Activated CD8-positive, alpha-beta T cell treated with anti-CD3 and anti-CD28 coated beads, Interleukin-2, amount 10 ng/mL, durations not matched to agents 7 days and 5 days (primary cell): ENCODE measurements at regions of chr11 and their contacts with region 1.

Region 1: GRCh38 chr11:62787005-62787759 is at the start of gene TMEM179B:
- DNase-seq: peak; percentile 100
- ATAC-seq: peak; percentile 70
- H3K4me3 Mint-ChIP-seq: peak within 1 kb of the TSS; percentile 96
- H3K27ac Mint-ChIP-seq: peak within 1 kb of the TSS; percentile 98
- H3K4me1 Mint-ChIP-seq: peaks cover 46% of the 10 kb centered on the region
- H3K27me3 Mint-ChIP-seq: no peaks in the 10 kb centered on the region
- total RNA-seq, gene TMEM179B: 37.3 to 40.8 TPM

Region 2: DNA sequence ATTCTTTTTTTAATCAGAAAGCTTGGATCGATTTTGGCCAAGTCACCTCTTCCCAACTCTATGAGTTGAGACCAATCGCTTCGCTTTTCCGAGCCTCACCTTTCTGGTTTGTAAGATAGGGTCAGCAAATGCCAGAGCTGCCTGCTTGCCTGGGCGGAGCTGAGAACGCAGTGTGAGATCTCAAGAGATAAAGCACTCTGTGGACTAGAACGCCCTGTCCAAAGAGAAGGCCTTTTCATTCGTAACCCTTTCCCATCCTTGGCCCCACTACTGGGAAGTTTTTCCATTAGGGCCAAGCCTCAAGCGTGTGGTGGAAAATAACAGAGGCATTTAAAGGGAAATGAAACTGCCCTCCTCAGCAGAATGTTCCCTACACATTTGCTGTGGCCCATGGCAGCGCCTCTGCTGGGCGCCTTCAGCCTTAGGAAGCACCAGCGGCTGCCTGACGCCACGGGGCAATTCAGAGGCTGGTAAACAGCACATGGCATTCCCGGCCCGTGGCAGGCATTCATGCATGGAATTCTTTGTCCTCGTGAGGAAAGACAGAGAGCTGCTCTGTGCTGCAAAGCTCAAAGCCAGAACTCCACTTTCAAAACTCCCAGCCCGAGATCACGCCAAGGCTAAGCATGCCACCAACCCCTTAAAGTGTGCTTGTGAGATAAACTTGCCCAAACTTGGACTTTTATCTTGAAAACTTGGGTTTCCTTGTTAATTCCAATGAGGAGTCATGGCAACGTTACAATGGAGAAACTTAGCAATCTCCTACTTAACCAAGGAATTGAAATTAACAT is 278.7 kb before region 1 on chr11:
- CTCF ChIA-PET with region 1: no interaction called
- POLR2A ChIA-PET with region 1: no interaction called
- DNase-seq: no peak
- ATAC-seq: no peak
- H3K4me3 Mint-ChIP-seq: no peak overlapping the region
- H3K27ac Mint-ChIP-seq: no peak overlapping the region
- H3K4me1 Mint-ChIP-seq: no peaks in the 10 kb centered on the region
- H3K27me3 Mint-ChIP-seq: peaks cover 17% of the 10 kb centered on the region

Region 3: DNA sequence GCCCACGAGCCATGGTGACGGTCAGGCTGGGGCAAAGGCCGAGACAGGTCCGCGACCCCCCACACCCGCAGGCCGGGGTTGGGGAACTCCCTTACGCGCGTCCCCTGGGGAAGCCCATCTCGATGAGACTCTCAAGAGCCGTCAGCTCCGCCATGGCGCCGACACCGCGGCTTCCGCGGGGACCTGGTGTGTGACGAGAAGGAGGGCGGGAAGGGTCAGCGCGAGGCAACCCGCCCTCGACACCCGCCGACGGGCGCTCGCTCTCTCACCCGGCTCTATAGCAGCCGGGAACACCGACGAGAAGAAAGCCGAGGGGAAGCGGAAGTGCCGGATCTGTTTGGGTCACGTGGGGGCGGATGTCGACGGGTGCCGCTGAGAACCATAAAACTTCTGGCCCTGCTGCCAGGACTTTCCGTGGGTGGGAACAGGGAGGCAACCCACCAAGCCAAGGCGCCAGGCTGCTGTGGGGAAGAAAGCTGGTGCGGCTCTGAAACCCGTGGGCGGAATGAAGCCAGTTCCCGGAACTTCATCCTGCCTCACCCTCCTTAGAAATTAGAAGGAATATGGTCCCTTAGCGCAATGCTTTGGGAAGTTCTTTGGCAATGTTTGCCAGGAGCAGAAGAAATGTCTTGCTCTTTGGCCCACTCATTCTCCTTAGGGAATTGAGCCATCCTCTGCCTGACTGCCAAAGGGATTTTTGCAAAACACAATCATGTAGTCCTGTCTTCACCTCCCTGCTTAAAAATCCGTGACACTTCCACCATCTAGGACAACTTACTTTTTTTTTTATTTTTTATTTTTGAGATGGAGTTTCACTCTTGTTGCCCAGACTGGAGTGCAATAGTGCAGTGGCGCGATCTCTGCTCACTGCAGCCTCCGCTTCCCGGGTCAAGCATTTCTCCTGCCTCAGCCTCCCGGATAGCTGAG is 108.1 kb before region 1 on chr11 and contains the start of gene UBXN1:
- CTCF ChIA-PET with region 1: interaction called, 11 read pairs
- POLR2A ChIA-PET with region 1: interaction called, 3 read pairs
- DNase-seq: peak; percentile 89
- ATAC-seq: peak; percentile 88
- H3K4me3 Mint-ChIP-seq: peak within 1 kb of the TSS; percentile 92
- H3K27ac Mint-ChIP-seq: peak within 1 kb of the TSS; percentile 87
- H3K4me1 Mint-ChIP-seq: peaks cover 42% of the 10 kb centered on the region
- H3K27me3 Mint-ChIP-seq: no peaks in the 10 kb centered on the region
- total RNA-seq, gene UBXN1: 107 to 118 TPM

Region 4: DNA sequence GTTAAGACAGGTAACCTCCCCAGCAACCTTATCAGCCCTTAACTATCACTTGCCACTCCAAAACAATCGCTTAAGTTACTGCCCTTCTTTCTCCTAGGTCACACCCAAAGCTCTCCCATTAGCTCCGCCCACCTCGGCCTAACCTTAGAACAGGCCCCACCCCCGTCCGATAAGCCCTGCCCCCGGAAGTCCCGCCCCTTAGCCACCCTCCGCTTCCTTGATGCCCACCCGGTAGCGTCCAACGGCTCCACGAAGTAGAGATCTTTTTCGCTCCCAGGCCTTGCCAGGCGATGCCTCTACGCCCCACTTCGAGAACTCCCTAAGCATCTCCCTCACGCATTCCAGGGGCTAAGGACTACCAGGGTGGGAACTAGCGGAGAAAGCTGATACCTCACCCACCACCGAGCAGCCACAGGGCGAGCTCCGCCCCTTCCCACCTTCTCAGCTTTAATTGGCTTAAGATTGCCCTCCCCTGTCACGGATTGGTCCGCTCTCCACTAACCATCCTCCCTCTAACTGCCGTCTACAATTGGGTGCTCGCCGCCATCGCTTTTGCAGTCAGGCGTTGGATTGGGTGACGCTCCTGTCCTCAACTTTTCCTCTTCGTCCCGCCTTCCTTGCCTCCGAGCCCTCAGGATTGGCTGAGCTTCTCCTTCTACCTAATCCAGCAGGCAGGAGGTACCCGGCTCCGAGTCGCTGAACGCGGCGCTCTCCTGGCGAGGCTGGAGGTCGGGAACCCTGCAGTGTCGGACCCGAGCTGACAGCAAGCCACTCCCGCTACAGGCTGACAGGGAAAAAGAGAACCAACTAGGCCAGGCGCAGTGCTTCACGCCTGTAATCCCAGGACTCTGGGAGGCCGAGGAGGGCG is 33.2 kb before region 1 on chr11 and contains the start of gene ZBTB3:
- CTCF ChIA-PET with region 1: interaction called, 47 read pairs
- POLR2A ChIA-PET with region 1: interaction called, 22 read pairs
- DNase-seq: peak; percentile 99
- ATAC-seq: peak; percentile 99
- H3K4me3 Mint-ChIP-seq: peak within 1 kb of the TSS; percentile 94
- H3K27ac Mint-ChIP-seq: peak within 1 kb of the TSS; percentile 97
- H3K4me1 Mint-ChIP-seq: peaks cover 31% of the 10 kb centered on the region
- H3K27me3 Mint-ChIP-seq: no peaks in the 10 kb centered on the region
- total RNA-seq, gene ZBTB3: 12.4 to 12.8 TPM

Region 5: DNA sequence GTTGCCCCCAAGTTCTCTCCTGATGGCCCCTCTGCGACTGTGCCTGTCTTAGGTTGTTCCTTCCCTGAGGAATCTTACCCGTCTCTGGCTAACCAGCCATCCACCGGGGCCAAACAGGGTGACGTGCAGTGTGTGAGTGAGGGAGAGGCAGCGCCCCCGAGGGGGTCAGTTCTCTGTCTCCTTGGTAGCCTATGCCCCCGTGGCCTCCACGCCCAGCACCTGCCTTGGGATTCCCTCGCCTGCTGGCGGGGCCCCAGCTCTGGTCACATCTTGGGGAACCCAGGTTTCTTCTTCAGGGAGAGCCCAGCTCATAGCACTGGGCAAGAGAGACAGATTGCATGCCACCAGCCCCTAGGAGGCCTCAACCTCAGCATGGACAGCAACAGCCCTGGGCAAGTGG is 12.3 kb after region 1 on chr11:
- CTCF ChIA-PET with region 1: interaction called, 23 read pairs
- POLR2A ChIA-PET with region 1: interaction called, 25 read pairs
- DNase-seq: no peak
- ATAC-seq: no peak
- H3K4me3 Mint-ChIP-seq: no peak overlapping the region
- H3K27ac Mint-ChIP-seq: no peak overlapping the region
- H3K4me1 Mint-ChIP-seq: peaks cover 18% of the 10 kb centered on the region
- H3K27me3 Mint-ChIP-seq: no peaks in the 10 kb centered on the region

Region 6: DNA sequence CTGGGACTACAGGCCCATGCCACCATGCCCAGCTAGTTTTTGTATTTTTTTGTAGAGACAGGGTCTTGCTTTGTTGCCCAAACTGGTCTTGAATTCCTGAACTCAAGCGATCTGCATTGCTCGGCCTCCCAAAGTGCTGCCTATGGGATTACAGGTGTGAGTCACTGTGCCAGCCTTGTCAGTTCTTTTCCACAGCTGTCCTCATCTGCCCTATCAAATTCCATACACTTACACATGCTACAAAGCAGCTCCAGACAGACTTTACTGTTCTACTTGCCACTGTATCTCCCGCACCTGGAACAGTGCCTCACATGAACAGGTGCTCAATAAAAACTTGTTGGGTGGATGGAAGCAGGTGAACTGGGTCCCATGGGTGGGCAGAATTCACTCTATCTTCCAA is 36.5 kb after region 1 on chr11:
- CTCF ChIA-PET with region 1: interaction called, 14 read pairs
- POLR2A ChIA-PET with region 1: interaction called, 4 read pairs
- DNase-seq: no peak
- ATAC-seq: no peak
- H3K4me3 Mint-ChIP-seq: no peak overlapping the region
- H3K27ac Mint-ChIP-seq: peak overlapping the region; percentile 32
- H3K4me1 Mint-ChIP-seq: peaks cover 19% of the 10 kb centered on the region
- H3K27me3 Mint-ChIP-seq: no peaks in the 10 kb centered on the region

Region 7: GRCh38 chr11:62855571-62856332 is 68.6 kb after region 1 on chr11:
- CTCF ChIA-PET with region 1: interaction called, 80 read pairs
- POLR2A ChIA-PET with region 1: interaction called, 54 read pairs
- DNase-seq: peak; percentile 99
- ATAC-seq: peak; percentile 85
- H3K4me3 Mint-ChIP-seq: peak overlapping the region; percentile 99
- H3K27ac Mint-ChIP-seq: peak overlapping the region; percentile 98
- H3K4me1 Mint-ChIP-seq: peaks cover 69% of the 10 kb centered on the region
- H3K27me3 Mint-ChIP-seq: no peaks in the 10 kb centered on the region

Region 8: DNA sequence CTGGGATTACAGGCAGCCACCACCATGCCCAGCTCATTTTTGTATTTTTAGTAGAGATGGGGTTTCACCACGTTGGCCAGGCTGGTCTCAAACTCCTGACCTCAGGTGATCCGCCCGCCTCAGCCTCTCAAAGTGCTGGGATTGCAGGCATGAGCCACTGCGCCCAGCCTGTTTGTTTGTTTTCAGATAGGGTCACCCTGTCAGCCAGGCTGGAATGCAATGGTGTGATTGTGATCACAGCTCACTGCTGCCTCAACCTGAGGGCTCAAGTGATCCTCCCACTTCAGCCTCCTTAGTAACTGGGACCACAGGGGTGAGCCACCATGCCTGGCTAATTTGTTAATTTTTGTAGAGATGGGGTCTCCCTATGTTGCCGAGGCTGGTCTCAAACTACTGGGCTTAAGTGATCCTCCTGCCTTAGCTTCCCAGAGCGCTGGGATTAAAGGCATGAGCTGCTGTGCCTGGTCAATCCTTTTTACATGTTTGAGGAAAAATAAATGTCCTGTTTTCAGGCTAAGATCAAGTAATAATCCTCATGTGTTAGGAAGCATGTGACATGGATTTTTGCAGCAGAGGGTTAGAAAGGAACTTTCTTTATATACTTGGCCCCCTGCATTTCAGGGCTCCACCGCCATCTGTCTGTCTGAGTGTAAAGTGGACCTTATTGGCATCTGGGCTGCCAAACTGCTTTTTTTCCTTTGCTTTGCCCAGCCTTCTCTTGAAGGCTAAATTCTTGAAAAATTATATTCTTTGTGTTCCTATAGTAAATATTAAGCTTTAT is 88.7 kb after region 1 on chr11:
- CTCF ChIA-PET with region 1: interaction called, 46 read pairs
- POLR2A ChIA-PET with region 1: interaction called, 22 read pairs
- DNase-seq: no peak
- ATAC-seq: no peak
- H3K4me3 Mint-ChIP-seq: no peak overlapping the region
- H3K27ac Mint-ChIP-seq: no peak overlapping the region
- H3K4me1 Mint-ChIP-seq: peaks cover 17% of the 10 kb centered on the region
- H3K27me3 Mint-ChIP-seq: no peaks in the 10 kb centered on the region

Region 9: DNA sequence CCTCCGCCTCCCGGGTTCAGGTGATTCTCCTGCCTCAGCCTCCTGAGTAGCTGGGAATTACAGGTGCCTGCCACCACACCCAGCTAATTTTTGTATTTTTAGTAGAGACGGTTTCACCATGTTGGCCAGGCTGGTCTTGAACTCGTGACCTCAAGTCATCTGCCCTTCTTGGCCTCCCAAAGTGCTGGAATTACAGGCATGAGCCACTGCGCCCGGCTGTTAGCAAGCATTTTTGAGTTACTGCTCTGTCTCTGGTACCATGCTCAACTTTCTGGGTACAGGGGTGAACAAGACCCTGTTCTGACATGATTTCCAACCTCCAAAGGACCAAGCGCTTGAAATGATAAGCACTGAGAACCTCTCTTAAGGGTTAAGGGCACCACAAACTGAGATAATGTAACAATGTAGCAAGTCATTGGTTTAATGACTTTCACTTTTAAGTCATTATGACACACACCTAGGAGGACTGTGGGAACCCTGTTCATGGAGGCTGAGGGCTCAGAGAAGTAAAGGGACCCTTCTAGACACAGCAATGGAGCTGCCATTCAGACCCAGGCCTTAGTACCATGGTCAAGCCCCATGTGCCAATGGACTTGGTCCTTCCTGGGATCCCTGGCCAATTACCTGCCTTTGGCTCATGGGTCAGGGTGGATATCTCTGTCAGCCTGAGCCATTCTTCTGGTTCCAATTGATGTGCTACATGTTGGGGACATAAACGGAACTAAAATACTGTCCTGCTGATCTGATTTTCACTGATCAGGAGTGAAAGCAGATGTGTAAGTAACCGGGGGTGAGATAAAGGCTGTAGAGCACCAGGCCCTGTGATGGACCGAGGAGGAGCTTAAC is 105.1 kb after region 1 on chr11:
- CTCF ChIA-PET with region 1: no interaction called
- POLR2A ChIA-PET with region 1: no interaction called
- DNase-seq: no peak
- ATAC-seq: peak; percentile 20
- H3K4me3 Mint-ChIP-seq: no peak overlapping the region
- H3K27ac Mint-ChIP-seq: no peak overlapping the region
- H3K4me1 Mint-ChIP-seq: no peaks in the 10 kb centered on the region
- H3K27me3 Mint-ChIP-seq: peaks cover 8% of the 10 kb centered on the region